Sigmoid colon (tissue), 7 donors: ENCODE measurements at regions of chr19 and their contacts with region 1.

Region 1: DNA sequence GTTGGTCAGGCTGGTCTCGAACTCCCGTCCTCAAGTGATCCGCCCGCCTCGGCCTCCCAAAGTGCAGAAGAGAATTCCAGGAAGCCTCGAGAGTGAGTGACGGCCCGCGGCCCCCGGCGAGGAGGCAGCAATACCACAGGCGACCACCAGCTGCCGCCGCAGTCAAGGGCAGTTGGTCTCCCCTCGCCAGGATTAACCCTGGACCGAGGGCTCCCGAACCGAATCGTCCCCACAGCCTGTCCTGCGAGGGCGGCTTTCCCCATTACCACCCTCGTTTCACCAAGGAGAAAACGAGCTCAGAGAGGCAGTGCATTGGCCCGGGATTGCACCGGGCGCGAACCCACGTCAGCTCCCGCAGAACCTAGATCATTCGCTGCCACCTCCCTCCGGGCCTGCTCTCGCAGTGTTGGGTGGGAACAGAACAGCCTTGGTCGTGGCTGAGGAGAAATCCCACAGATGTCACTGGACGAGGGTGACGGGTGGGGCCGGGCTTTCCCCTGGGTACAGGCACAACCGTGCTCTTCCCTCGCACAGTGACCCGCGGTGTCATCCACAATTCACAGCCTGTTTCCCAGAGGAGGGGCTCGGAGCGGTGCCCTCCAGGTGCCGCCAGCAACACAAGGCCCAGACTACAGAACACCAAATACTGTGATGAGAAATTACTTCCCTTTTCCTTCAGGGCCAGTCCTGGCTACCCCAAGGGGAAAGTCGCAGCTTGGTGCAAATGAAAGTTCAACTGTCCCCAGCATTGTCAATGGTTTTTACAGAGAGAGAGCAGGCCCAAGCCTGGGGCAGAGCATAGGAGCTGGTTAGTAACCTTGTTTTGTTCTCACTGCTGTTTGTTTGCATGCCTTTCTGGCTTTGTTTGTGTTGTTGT is 24.8 kb downstream of the C2CD4C start:
- DNase-seq: peak; percentile 65
- H3K4me3 ChIP-seq: no peak overlapping the region
- H3K27ac ChIP-seq: no peak overlapping the region
- H3K4me1 ChIP-seq: no peaks in the 10 kb centered on the region
- H3K27me3 ChIP-seq: peaks cover 0 to 28% (median 9%) of the 10 kb centered on the region in 3 donors
- CTCF ChIP-seq: peak; percentile 43 to 75 (median 60)
- EP300 ChIP-seq: no peak
- POLR2A ChIP-seq: no peak

Region 2: GRCh38 chr19:480016-480855 is 96.1 kb after region 1 on chr19:
- intact Hi-C with region 1: loop called (anchors 2 kb)
- DNase-seq: peak; percentile 91
- H3K4me3 ChIP-seq: peak overlapping the region in 2 of 4 donors; percentile 32 to 34
- H3K27ac ChIP-seq: peak overlapping the region in 2 of 4 donors; percentile 48 to 51
- H3K4me1 ChIP-seq: peaks cover 0 to 7% (median 3%) of the 10 kb centered on the region in 4 donors
- H3K27me3 ChIP-seq: peaks cover 0 to 14% (median 5%) of the 10 kb centered on the region in 3 donors
- CTCF ChIP-seq: peak; percentile 56 to 69 (median 63)
- EP300 ChIP-seq: no peak
- POLR2A ChIP-seq: no peak